Activated CD8-positive, alpha-beta memory T cell treated with anti-CD3 and anti-CD28 coated beads, Interleukin-2, amount 10 ng/mL, durations not matched to agents 7 days and 5 days (primary cell): ENCODE measurements at regions of chr2 and their contacts with region 1.

Region 1: DNA sequence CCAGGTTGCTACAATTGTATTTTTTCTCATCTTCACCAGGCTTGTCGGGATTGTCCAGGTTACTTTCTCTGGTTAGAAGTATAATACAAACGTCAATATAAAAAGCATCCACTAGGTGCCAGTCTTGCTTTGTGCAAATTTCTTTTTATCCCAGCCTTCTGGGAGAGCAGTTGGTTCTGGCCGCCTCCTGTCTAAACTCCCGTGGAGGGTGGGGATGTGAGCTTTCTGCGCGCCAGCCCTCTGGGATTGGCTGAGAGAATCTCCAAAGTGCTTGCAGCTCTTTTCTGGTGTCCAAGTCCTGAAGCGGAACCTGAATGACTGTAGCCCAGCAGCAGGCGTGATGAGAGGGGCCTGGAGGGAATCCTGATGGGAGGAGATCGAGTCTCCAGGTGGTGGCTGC is 22.4 kb upstream of the TOGARAM2 start:
- DNase-seq: peak; percentile 62
- ATAC-seq: peak; percentile 73
- H3K4me3 Mint-ChIP-seq: no peak overlapping the region
- H3K27ac Mint-ChIP-seq: no peak overlapping the region
- H3K4me1 Mint-ChIP-seq: peaks cover 19% of the 10 kb centered on the region
- H3K27me3 Mint-ChIP-seq: no peaks in the 10 kb centered on the region

Region 2: GRCh38 chr2:28102455-28102874 is 856.2 kb before region 1 on chr2:
- CTCF ChIA-PET with region 1: no interaction called
- DNase-seq: peak; percentile 66
- ATAC-seq: peak; percentile 84
- H3K4me3 Mint-ChIP-seq: peak overlapping the region; percentile 30
- H3K27ac Mint-ChIP-seq: peak overlapping the region; percentile 71
- H3K4me1 Mint-ChIP-seq: peaks cover 36% of the 10 kb centered on the region
- H3K27me3 Mint-ChIP-seq: no peaks in the 10 kb centered on the region

Region 3: GRCh38 chr2:28944535-28945248 is 14.0 kb before region 1 on chr2:
- CTCF ChIA-PET with region 1: interaction called, 12 read pairs
- DNase-seq: no peak
- ATAC-seq: no peak
- H3K4me3 Mint-ChIP-seq: no peak overlapping the region
- H3K27ac Mint-ChIP-seq: no peak overlapping the region
- H3K4me1 Mint-ChIP-seq: peaks cover 6% of the 10 kb centered on the region
- H3K27me3 Mint-ChIP-seq: no peaks in the 10 kb centered on the region

Region 4: DNA sequence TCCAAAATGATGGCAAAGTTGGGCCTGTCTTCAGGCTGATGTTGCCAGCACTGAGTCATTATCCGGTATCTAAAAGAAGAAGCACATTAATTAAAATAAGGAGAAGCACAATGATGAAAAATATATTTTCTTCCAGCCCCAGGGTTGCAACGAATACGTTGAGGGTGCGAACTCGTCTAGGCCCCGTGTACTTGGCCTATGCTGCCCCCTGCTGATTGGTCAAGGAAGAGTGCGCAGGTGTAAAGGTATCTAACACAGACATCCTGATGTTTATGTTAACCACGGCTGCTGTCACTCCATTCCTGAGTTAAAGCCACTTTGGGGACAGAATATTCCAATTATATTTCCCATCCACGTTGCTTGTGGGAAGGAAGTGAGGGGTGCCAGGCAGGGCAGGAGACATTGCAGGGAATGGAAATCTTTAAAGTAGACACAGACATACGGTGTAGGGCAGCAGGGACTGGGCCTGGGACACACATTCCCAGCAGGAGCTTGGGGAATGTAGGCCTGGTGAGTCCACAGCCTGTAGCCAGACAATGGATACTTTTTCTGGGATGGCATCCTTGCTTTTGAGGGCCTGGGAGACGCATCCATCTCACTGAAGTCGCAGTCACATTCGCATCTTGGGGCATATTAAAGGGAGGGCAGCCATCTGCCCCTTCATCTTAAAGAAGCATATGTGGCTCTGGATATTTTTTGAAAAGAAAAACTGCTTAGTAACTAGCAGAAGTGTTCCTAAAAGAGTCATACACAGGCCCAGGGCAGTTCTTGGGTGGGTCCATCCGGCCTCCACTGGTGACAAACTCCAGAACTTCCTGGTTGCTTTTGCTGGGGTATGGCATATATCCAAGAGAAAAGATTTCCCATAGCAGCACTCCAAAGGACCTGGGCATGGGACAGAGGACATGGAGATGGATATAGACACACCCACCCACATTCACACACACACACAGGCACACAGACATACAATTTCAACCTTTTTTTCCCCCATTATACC is 238.4 kb after region 1 on chr2:
- CTCF ChIA-PET with region 1: interaction called, 10 read pairs
- DNase-seq: peak; percentile 87
- ATAC-seq: peak; percentile 97
- H3K4me3 Mint-ChIP-seq: no peak overlapping the region
- H3K27ac Mint-ChIP-seq: no peak overlapping the region
- H3K4me1 Mint-ChIP-seq: peaks cover 1% of the 10 kb centered on the region
- H3K27me3 Mint-ChIP-seq: no peaks in the 10 kb centered on the region